Adrenal gland (tissue), 19 donors: ENCODE measurements at regions of chr6 and their contacts with region 1.

Region 1: GRCh38 chr6:32885698-32886286 is 31.8 kb downstream of the PSMB9 start:
- DNase-seq: no peak
- H3K4me3 ChIP-seq: no peak overlapping the region
- H3K27ac ChIP-seq: peak overlapping the region in 1 of 5 donors; percentile 24
- H3K4me1 ChIP-seq: peaks cover 12 to 20% of the 10 kb centered on the region in 2 donors
- H3K27me3 ChIP-seq: no peaks in the 10 kb centered on the region
- CTCF ChIP-seq: peak; percentile 59 to 87 (median 76)
- POLR2A ChIP-seq: no peak

Region 2: DNA sequence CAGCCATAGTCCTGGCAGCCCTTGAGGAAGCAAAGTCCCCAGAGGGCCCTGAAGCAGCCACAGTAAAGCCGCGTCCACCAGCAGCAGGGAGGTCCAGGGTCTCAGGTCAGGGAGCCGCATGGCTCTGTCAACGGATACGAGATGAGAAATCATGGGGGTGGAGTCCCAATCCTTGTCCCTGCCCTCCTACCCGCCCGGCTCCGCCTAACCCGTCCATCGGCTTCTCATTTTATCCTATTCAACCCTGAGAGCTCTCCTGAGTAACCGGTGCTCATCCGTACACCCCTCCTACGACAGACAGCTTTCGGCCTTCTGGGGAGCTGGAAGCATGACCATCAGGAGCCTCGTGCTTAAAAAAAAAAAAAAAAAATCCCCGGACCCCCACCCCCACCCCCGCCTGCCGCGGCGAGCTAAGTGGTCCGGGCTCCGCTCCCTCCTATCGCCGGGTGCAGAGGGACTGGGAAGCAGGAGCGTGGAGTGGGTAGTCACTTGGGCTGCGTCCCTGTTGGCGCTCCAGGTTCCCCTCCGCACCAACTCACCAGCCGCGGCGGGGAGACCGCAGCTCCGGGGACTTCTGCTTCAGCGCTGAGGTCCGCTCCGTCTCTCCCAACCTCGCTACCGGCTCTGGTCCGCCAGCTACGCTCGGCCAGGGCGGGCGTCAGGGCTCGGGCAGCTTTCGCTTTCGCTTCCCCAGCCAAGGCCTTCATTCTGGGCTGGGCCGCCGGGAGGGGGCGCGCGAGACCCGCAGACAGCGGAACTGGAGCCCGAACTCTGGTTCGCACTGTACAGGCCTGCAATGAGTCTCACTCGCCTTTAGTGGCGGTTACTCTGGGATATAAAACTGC is 47.5 kb before region 1 on chr6 and contains the start of gene TAP2:
- intact Hi-C with region 1: no loop called
- DNase-seq: peak; percentile 95 to 98 (median 97)
- H3K4me3 ChIP-seq: peak within 1 kb of the TSS in 3 of 4 donors; percentile 50 to 97 (median 90)
- H3K27ac ChIP-seq: peak within 1 kb of the TSS; percentile 79 to 97 (median 92)
- H3K4me1 ChIP-seq: peaks cover 17 to 29% of the 10 kb centered on the region in 2 donors
- H3K27me3 ChIP-seq: no peaks in the 10 kb centered on the region
- CTCF ChIP-seq: peak; percentile 81 to 99 (median 98)
- POLR2A ChIP-seq: peak in 1 of 2 donors; percentile 69
- total RNA-seq, gene TAP2: 4.8 to 48.0 (median 19.4) TPM

Region 3: DNA sequence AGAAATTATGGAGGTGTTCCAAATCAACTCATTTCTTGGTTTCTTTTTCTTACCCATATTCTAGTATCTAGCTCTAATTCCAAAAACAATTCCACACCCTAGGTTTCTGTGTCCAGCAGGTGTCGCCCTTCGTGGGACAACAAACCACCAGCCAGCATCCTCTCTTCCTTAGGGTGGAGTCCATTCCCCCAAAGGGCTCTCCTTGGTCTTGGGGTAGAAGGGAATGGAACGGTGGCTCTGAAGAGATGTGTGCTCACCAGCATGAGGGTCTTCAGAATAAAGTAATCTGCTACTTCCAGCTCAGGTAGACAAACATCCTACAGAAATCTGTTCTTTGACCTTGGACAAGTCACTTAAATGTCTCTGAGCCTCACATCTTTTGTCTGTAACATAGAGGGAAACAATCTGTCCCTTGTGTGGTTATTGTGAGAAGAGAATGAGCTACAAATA is 47.9 kb after region 1 on chr6:
- intact Hi-C with region 1: loop called in 1 of 2 experiments (anchors 10 kb)
- DNase-seq: peak; percentile 69 to 94 (median 79)
- H3K4me3 ChIP-seq: no peak overlapping the region
- H3K27ac ChIP-seq: peak overlapping the region in 1 of 5 donors; percentile 24
- H3K4me1 ChIP-seq: peaks cover 0 to 10% of the 10 kb centered on the region in 2 donors
- H3K27me3 ChIP-seq: no peaks in the 10 kb centered on the region
- CTCF ChIP-seq: peak; percentile 66 to 81 (median 76)
- POLR2A ChIP-seq: no peak

Region 4: DNA sequence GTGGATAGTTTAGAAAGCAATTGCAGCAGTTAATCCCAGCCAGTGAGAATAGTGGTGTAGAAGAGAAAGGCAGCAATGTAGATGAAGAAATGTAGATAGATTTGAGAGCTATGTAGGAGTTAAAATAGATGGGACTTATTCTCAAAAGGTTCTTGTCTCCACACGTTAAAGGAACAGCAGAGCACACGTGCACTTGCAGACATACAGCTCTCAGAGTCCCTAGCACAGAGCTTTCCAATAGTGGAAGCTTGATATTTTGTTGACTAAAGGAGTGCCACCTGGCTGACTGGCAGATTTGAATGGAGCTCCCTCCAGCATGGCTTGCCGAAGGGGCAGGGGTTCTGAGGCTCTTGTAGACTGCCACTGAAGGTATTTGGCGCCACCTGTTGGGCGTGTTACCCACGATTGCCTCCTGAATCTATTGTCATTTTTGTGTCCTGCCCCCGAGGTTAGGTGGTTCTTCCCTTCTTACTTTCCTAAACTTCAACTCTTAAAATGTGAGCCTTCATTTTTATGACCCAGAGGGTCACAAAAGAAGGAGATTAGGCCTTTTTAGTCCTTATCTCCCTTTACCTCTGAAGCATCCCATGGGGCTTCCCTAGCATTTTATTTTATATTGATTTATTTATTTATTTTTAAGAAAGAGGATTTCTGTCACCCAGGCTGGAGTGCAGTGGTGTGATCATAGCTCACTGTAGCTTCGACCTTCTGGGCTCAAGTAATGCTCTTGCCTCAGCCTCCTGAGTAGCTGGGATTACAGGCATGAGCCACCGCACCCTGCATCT is 99.0 kb after region 1 on chr6:
- intact Hi-C with region 1: loop called (anchors 5 kb)
- DNase-seq: peak; percentile 87 to 98 (median 95)
- H3K4me3 ChIP-seq: no peak overlapping the region
- H3K27ac ChIP-seq: peak overlapping the region in 1 of 5 donors; percentile 24
- H3K4me1 ChIP-seq: peaks cover 0 to 10% of the 10 kb centered on the region in 2 donors
- H3K27me3 ChIP-seq: no peaks in the 10 kb centered on the region
- CTCF ChIP-seq: peak; percentile 83 to 93 (median 88)
- POLR2A ChIP-seq: no peak